Posterior vena cava (tissue), 2 donors: ENCODE measurements at regions of chr11 and their contacts with region 1.

Region 1: GRCh38 chr11:11265994-11266606 is 87.0 kb downstream of the CSNK2A3 start:
- DNase-seq: no peak

Region 2: DNA sequence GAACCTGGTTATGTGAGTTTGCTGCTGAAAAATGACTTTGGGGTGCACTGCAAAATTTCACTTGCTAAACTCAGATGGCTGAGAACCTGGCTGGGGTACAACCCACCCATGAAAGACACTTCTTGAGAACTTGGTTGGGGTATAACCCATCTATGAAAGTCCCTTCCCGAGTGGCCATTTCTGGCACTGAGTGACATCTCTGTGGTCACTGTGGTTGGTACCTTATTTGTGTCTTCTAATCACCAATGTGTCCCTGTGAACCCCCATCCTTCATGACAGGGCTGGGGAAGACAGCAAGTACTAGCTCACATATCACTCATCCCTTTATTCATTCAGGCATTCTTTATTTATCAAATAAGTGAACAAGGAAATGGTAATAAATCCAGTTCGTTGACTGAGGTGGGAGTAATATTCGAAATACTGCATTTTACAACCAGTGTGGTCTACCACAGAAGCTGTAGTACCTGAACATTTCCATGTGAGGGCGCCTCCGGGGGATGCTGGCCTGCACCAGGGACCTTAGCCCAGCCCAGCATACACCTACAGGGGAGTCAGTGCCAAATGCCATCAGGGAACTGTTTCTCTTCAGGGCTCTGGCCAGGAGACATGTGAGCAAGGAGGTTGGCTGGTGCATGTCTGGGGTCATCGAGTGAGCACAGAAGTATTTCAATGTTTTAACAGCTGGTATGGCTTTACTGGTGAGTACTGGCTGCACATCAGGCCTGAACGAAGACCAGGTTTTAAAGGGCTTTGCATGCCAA is 35.1 kb before region 1 on chr11:
- intact Hi-C with region 1: no loop called
- DNase-seq: no peak

Region 3: GRCh38 chr11:11344045-11344444 is 77.9 kb after region 1 on chr11:
- intact Hi-C with region 1: loop called in 1 of 2 experiments (anchors 2 kb)
- DNase-seq: no peak